Brain microvascular endothelial cell (primary cell): ENCODE measurements at regions of chr7 and their contacts with region 1.

Region 1: GRCh38 chr7:77657427-77658224 is 38.6 kb upstream of the RSBN1L start:
- DNase-seq: no peak
- H3K4me3 ChIP-seq: no peak overlapping the region
- H3K27ac ChIP-seq: no peak overlapping the region
- H3K27me3 ChIP-seq: no peaks in the 10 kb centered on the region
- CTCF ChIP-seq: peak; percentile 32

Region 2: DNA sequence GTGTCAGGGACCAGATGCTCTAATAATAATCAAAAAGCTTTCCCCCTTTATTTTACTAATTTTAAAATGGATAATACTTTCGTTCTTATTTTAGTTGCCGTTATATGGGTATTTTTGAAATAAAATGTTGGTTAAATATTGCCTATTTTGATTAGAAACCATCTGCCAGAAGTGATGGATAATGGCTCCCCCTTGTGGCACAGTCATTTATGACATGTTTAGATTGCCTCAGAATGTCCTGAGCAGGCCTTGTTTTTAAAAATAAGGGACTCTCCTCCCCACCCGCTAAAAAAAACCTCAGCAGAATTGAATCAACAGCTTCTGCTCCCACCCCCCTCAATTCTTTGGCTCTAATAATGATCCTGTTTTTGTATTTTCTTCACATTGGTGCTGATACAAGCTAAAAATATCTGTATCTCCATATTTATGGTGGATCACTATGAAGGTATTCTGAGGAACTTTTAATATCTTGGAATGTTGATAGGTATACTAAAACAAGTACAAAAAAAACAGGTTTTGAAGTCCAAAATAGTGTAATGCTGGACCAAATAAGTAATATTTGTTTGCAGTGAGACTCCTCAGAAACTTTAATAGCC is 101.8 kb after region 1 on chr7:
- in situ Hi-C with region 1: loop called (anchors 25 kb)
- DNase-seq: peak; percentile 81
- H3K4me3 ChIP-seq: no peak overlapping the region
- H3K27ac ChIP-seq: no peak overlapping the region
- H3K27me3 ChIP-seq: no peaks in the 10 kb centered on the region
- CTCF ChIP-seq: peak; percentile 74